OCI-LY7 (cell line): ENCODE measurements at regions of chr10 and their contacts with region 1.

Region 1: DNA sequence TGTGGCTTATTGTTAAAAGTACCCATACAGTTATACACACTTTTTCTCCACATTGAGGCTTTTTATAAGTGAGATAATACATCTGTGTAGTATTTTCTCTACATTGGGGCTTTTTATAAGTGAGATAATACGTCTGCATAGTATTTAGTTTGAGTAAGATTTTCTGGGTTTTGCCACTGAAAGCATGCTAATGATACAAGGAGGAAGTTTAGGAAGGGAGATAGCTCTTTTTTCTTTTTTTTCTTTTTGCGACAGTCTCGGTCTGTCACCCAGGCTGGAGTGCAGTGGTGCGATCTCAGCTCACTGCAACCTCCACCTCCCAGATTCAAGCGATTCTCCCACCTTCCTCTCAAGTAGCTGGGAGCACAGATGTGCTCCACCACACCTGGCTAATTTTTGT is 13.3 kb downstream of the FAM107B start:
- DNase-seq: peak; percentile 49
- H3K4me3 ChIP-seq: no peak overlapping the region
- H3K27ac ChIP-seq: no peak overlapping the region
- H3K4me1 ChIP-seq: peaks cover 43% of the 10 kb centered on the region
- CTCF ChIP-seq: no peak

Region 2: GRCh38 chr10:14751014-14751896 is 10.1 kb before region 1 on chr10:
- CTCF ChIA-PET with region 1: interaction called, 4 read pairs
- POLR2A ChIA-PET with region 1: interaction called, 10 read pairs
- intact Hi-C with region 1: no loop called
- DNase-seq: peak; percentile 96
- H3K4me3 ChIP-seq: peak overlapping the region; percentile 37
- H3K27ac ChIP-seq: peak overlapping the region; percentile 88
- H3K4me1 ChIP-seq: peaks cover 63% of the 10 kb centered on the region
- CTCF ChIP-seq: no peak

Region 3: GRCh38 chr10:14782691-14783363 is 21.5 kb after region 1 on chr10:
- CTCF ChIA-PET with region 1: no interaction called
- POLR2A ChIA-PET with region 1: no interaction called
- intact Hi-C with region 1: no loop called
- DNase-seq: no peak
- H3K4me3 ChIP-seq: no peak overlapping the region
- H3K27ac ChIP-seq: no peak overlapping the region
- H3K4me1 ChIP-seq: peaks cover 5% of the 10 kb centered on the region
- CTCF ChIP-seq: no peak

Region 4: GRCh38 chr10:14852236-14852635 is 90.9 kb after region 1 on chr10:
- CTCF ChIA-PET with region 1: no interaction called
- POLR2A ChIA-PET with region 1: no interaction called
- intact Hi-C with region 1: no loop called
- DNase-seq: no peak
- H3K4me3 ChIP-seq: no peak overlapping the region
- H3K27ac ChIP-seq: no peak overlapping the region
- H3K4me1 ChIP-seq: peaks cover under 1% of the 10 kb centered on the region
- CTCF ChIP-seq: no peak